ENCODE measurements at regions of chr11 and their contacts with region 1.

Region 1: GRCh38 chr11:65506770-65507505 is 8.1 kb downstream of the MALAT1 start:
- DNase-seq: peak in 4 of 5 donors; percentile 65 to 91 (median 80)
- H3K4me3 ChIP-seq: peak overlapping the region in 2 of 3 donors; percentile 22 to 93
- H3K27ac ChIP-seq: peak overlapping the region; percentile 99
- H3K4me1 ChIP-seq: peaks cover 0 to 10% (median 6%) of the 10 kb centered on the region in 3 donors
- H3K27me3 ChIP-seq: no peaks in the 10 kb centered on the region
- CTCF ChIP-seq: no peak

Region 2: DNA sequence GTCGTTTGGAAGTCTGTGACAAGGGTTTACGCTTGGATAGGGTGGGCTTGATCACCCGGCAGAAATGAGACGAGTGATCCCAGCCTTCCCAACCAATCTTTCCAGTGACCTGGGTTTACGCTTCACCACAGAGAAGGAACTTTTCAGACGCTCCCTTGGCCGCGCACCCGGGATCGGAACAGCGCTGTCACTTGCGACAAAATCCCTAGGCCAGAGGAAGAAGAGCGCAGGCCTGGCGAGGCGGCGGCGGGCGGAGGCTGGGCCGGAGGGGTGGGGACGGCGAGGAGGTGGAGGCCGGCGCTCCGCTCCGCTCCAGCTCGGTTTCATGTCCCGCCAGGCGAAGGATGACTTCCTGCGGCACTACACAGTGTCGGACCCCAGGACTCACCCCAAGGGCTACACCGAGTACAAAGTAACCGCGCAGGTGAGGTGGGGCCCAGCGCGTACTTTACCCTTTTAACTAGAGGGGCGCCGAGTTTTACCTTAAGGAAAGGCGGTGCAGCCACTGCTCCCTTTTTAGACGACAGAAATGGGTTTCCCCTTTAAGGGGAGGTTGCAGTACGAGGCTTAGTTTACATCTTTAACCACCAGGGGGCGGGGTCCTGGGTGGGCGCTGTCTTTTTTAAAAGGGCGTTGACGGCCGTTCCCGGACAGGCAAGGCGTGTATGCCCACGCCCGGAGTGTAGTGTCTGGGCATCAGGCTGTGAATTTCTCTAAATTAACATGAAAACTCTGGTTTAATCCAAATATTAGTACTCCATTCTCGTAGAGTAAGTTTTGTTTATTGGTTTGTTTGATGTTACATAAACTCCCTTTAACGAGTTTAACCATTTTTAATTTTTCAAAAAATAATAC is 479.5 kb before region 1 on chr11 and contains the start of gene SNX15:
- intact Hi-C with region 1: no loop called
- DNase-seq: peak; percentile 95 to 99 (median 97)
- H3K4me3 ChIP-seq: peak within 1 kb of the TSS; percentile 64 to 80 (median 68)
- H3K27ac ChIP-seq: peak within 1 kb of the TSS; percentile 88 to 93
- H3K4me1 ChIP-seq: peaks cover 0 to 9% (median 3%) of the 10 kb centered on the region in 3 donors
- H3K27me3 ChIP-seq: no peaks in the 10 kb centered on the region
- CTCF ChIP-seq: peak; percentile 55
- total RNA-seq, gene SNX15: 29.6 TPM

Region 3: GRCh38 chr11:65251476-65251875 is 255.5 kb before region 1 on chr11:
- intact Hi-C with region 1: no loop called
- DNase-seq: no peak
- H3K4me3 ChIP-seq: no peak overlapping the region
- H3K27ac ChIP-seq: no peak overlapping the region
- H3K4me1 ChIP-seq: peaks cover 0 to 5% (median 3%) of the 10 kb centered on the region in 3 donors
- H3K27me3 ChIP-seq: no peaks in the 10 kb centered on the region
- CTCF ChIP-seq: no peak

Region 4: GRCh38 chr11:65418711-65419459 is 88.1 kb before region 1 on chr11:
- intact Hi-C with region 1: loop called (anchors 5 kb)
- DNase-seq: peak; percentile 95 to 100 (median 97)
- H3K4me3 ChIP-seq: peak overlapping the region; percentile 34 to 80 (median 68)
- H3K27ac ChIP-seq: peak overlapping the region; percentile 99 to 100
- H3K4me1 ChIP-seq: peaks cover 5 to 40% (median 38%) of the 10 kb centered on the region in 3 donors
- H3K27me3 ChIP-seq: no peaks in the 10 kb centered on the region
- CTCF ChIP-seq: no peak

Region 5: GRCh38 chr11:65448418-65449105 is 58.4 kb before region 1 on chr11:
- intact Hi-C with region 1: no loop called
- DNase-seq: peak in 1 of 5 donors; percentile 48
- H3K4me3 ChIP-seq: no peak overlapping the region
- H3K27ac ChIP-seq: peak overlapping the region in 1 of 2 donors; percentile 7
- H3K4me1 ChIP-seq: peaks cover 0 to 4% (median 0%) of the 10 kb centered on the region in 3 donors
- H3K27me3 ChIP-seq: no peaks in the 10 kb centered on the region
- CTCF ChIP-seq: no peak

Measured in kidney (tissue), 22 donors.